ENCODE measurements at regions of chr17 and their contacts with region 1.

Region 1: DNA sequence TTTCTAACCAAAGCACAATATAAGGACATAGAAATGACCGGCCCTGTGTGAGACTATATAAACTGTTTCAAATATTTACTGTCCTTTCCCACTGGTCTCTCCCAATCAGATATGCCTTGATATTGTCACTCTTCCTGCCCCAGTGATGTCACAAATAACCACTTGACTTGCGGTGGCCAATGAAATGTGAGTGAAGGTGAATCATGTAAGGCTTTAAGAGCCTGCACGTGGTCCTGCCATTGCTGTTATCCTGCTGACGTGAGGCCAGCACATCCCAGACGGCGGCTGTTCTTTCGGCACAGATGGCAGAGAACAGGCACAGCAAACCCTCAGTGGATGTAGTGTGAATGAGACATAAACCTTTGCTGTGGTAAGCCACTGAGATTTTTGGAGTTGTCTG is 5.4 kb upstream of the KLHL11 start:
- DNase-seq: no peak
- ATAC-seq: peak in 3 of 8 donors; percentile 25 to 41 (median 39)
- H3K4me3 ChIP-seq: no peak overlapping the region
- H3K27ac ChIP-seq: no peak overlapping the region
- H3K4me1 ChIP-seq: peaks cover 0 to 5% (median 0%) of the 10 kb centered on the region in 9 donors
- H3K27me3 ChIP-seq: no peaks in the 10 kb centered on the region
- CTCF ChIP-seq: no peak

Region 2: GRCh38 chr17:41919840-41920599 is 49.4 kb after region 1 on chr17:
- intact Hi-C with region 1: loop called in 1 of 10 experiments (anchors 5 kb)
- DNase-seq: no peak
- ATAC-seq: no peak
- H3K4me3 ChIP-seq: peak overlapping the region in 2 of 10 donors; percentile 85 to 88
- H3K27ac ChIP-seq: peak overlapping the region in 3 of 10 donors; percentile 62 to 92 (median 88)
- H3K4me1 ChIP-seq: peaks cover 6 to 39% (median 23%) of the 10 kb centered on the region in 9 donors
- H3K27me3 ChIP-seq: no peaks in the 10 kb centered on the region
- CTCF ChIP-seq: no peak

Region 3: GRCh38 chr17:42019509-42020404 is 149.1 kb after region 1 on chr17 and contains the start of gene NKIRAS2:
- intact Hi-C with region 1: no loop called
- DNase-seq: peak; percentile 94 to 95
- ATAC-seq: peak; percentile 76 to 84 (median 80)
- H3K4me3 ChIP-seq: peak within 1 kb of the TSS; percentile 73 to 98 (median 92)
- H3K27ac ChIP-seq: peak within 1 kb of the TSS; percentile 52 to 96 (median 90)
- H3K4me1 ChIP-seq: peaks cover 7 to 65% (median 49%) of the 10 kb centered on the region in 9 donors
- H3K27me3 ChIP-seq: no peaks in the 10 kb centered on the region
- CTCF ChIP-seq: peak; percentile 84 to 98 (median 96)
- total RNA-seq, gene NKIRAS2: 50.1 to 64.1 (median 57.2) TPM

Measured in heart right ventricle (tissue), 16 donors.